Cardiac septum (tissue), 1 donor: ENCODE measurements at regions of chr12 and their contacts with region 1.

Region 1: GRCh38 chr12:114403011-114403689 is 2.8 kb downstream of the TBX5 start:
- DNase-seq: no peak

Region 2: GRCh38 chr12:114245555-114245954 is 157.6 kb before region 1 on chr12:
- intact Hi-C with region 1: loop called (anchors 5 kb)
- DNase-seq: no peak

Region 3: DNA sequence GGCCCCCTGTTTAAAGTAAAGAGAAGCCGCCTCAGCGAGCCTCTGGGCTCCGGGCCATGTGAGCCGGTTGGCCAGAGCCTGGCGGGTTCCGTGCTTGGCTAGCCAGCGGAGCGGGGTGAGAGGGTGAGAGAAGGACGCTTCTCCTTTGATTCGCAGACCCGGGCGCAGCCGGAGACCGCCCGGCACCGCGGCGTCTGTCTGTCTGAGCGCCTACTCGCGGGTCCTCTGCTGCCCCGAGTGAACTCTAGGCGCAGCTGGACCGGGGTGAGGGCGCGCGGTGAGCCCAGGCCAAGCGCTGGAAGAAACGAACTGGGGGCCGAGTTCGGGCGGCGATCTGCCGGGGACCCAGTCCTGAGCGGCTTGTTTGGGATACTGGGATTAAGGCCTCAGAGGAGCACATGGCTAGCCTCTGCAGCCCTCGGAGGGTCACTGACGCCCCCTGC is 44.1 kb after region 1 on chr12:
- intact Hi-C with region 1: loop called (anchors 5 kb)
- DNase-seq: no peak